ENCODE measurements at regions of chr19 and their contacts with region 1.

Region 1: GRCh38 chr19:10269333-10270179 is 1.4 kb upstream of the ICAM1 start:
- DNase-seq: peak; percentile 73 to 91 (median 85)
- ATAC-seq: peak; percentile 75 to 76
- H3K4me3 Mint-ChIP-seq: peak overlapping the region; percentile 76 to 88 (median 84)
- H3K27ac Mint-ChIP-seq: peak overlapping the region; percentile 72 to 92 (median 88)
- H3K4me1 Mint-ChIP-seq: peaks cover 4 to 30% (median 25%) of the 10 kb centered on the region in 4 donors
- H3K27me3 Mint-ChIP-seq: no peaks in the 10 kb centered on the region

Region 2: GRCh38 chr19:10292206-10292788 is 22.7 kb after region 1 on chr19:
- POLR2A ChIA-PET with region 1: interaction called, 13 read pairs
- DNase-seq: peak; percentile 51 to 78 (median 60)
- ATAC-seq: peak; percentile 7 to 38
- H3K4me3 Mint-ChIP-seq: peak overlapping the region; percentile 39 to 94 (median 84)
- H3K27ac Mint-ChIP-seq: peak overlapping the region in 5 of 10 donors; percentile 14 to 85 (median 48)
- H3K4me1 Mint-ChIP-seq: peaks cover 32 to 72% (median 68%) of the 10 kb centered on the region in 4 donors
- H3K27me3 Mint-ChIP-seq: peaks cover 18 to 79% (median 42%) of the 10 kb centered on the region in 5 donors

Region 3: GRCh38 chr19:10380313-10381102 is 111.0 kb after region 1 on chr19 and contains the start of gene TYK2:
- POLR2A ChIA-PET with region 1: interaction called, 52 read pairs
- DNase-seq: peak; percentile 86 to 98 (median 96)
- ATAC-seq: peak; percentile 97 to 99
- H3K4me3 Mint-ChIP-seq: peak within 1 kb of the TSS; percentile 88 to 97 (median 94)
- H3K27ac Mint-ChIP-seq: peak within 1 kb of the TSS; percentile 85 to 98 (median 93)
- H3K4me1 Mint-ChIP-seq: peaks cover 8 to 29% (median 26%) of the 10 kb centered on the region in 4 donors
- H3K27me3 Mint-ChIP-seq: no peaks in the 10 kb centered on the region
- polyA plus RNA-seq, gene TYK2: 33.4 to 50.3 (median 43.9) TPM

Region 4: GRCh38 chr19:10388957-10389356 is 119.4 kb after region 1 on chr19:
- POLR2A ChIA-PET with region 1: interaction called, 52 read pairs
- DNase-seq: peak; percentile 65 to 89 (median 79)
- ATAC-seq: peak; percentile 72 to 74
- H3K4me3 Mint-ChIP-seq: peak overlapping the region in 1 of 10 donors; percentile 20
- H3K27ac Mint-ChIP-seq: peak overlapping the region in 5 of 10 donors; percentile 33 to 80 (median 67)
- H3K4me1 Mint-ChIP-seq: peaks cover 0 to 7% (median 2%) of the 10 kb centered on the region in 4 donors
- H3K27me3 Mint-ChIP-seq: no peaks in the 10 kb centered on the region